PC-9 (cell line): ENCODE measurements at regions of chr22 and their contacts with region 1.

Region 1: GRCh38 chr22:47294222-47294532 is 531.7 kb downstream of the TBC1D22A start:
- DNase-seq: no peak
- H3K4me3 ChIP-seq: no peak overlapping the region
- H3K27ac ChIP-seq: no peak overlapping the region
- H3K4me1 ChIP-seq: no peaks in the 10 kb centered on the region
- H3K27me3 ChIP-seq: peaks cover 96% of the 10 kb centered on the region
- CTCF ChIP-seq: no peak

Region 2: DNA sequence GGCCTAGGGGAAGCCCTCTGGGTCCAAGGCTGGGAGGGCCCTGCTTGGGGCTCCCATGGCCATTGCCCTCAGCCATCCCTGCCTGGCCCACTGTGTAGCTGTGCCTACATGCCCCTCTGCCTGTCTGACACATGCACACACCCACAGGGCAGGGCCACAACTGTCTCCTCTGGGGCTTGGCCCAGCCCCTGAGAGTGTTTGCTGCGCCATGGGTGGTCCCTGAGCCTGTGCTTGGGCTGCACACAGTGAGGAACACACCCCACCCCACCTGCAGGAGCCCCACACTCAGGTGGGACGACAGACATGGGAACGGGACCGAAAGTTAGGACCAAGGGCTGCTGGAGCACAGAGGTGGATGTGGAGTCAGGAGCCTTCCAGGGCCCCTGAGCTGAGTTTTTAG is 42.3 kb before region 1 on chr22:
- CTCF ChIA-PET with region 1: no interaction called
- POLR2A ChIA-PET with region 1: interaction called, 16 read pairs
- intact Hi-C with region 1: no loop called
- DNase-seq: peak in 1 of 2 experiments; percentile 28
- H3K4me3 ChIP-seq: no peak overlapping the region
- H3K27ac ChIP-seq: no peak overlapping the region
- H3K4me1 ChIP-seq: no peaks in the 10 kb centered on the region
- H3K27me3 ChIP-seq: peaks cover 83% of the 10 kb centered on the region
- CTCF ChIP-seq: no peak

Region 3: GRCh38 chr22:47270463-47271135 is 23.6 kb before region 1 on chr22:
- CTCF ChIA-PET with region 1: no interaction called
- POLR2A ChIA-PET with region 1: no interaction called
- intact Hi-C with region 1: no loop called
- DNase-seq: no peak
- H3K4me3 ChIP-seq: no peak overlapping the region
- H3K27ac ChIP-seq: no peak overlapping the region
- H3K4me1 ChIP-seq: 0 out of 2 replicates have a peak, but pooled peaks cover 5% of the 10 kb centered on the region
- H3K27me3 ChIP-seq: peaks cover 64% of the 10 kb centered on the region
- CTCF ChIP-seq: no peak

Region 4: GRCh38 chr22:47310601-47311000 is 16.4 kb after region 1 on chr22:
- CTCF ChIA-PET with region 1: no interaction called
- POLR2A ChIA-PET with region 1: interaction called, 19 read pairs
- intact Hi-C with region 1: no loop called
- DNase-seq: peak in 1 of 2 experiments; percentile 42
- H3K4me3 ChIP-seq: no peak overlapping the region
- H3K27ac ChIP-seq: no peak overlapping the region
- H3K4me1 ChIP-seq: no peaks in the 10 kb centered on the region
- H3K27me3 ChIP-seq: no peaks in the 10 kb centered on the region
- CTCF ChIP-seq: no peak

Region 5: DNA sequence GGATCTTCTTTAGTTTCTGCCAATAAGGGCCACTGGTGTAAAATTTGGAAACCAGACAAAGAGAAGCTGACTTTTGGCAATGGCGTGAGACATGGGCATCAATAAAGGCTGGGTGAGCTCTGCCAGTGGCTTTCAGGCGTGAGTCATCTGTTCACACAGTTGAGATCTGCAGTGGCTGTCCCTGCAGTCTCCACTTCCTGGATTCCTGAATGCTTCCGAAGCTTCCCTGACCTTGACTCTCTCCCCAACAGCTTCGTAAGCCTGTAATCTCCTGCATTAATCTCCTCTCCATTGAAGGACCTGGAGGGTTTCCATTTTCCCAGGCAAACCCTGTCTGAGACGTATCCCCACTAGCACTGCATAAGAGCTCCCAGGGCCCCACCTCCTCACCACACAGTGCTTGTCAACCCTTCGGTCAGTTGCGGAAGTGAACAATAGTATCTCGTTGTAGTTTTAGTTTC is 43.0 kb after region 1 on chr22:
- CTCF ChIA-PET with region 1: no interaction called
- POLR2A ChIA-PET with region 1: interaction called, 25 read pairs
- intact Hi-C with region 1: no loop called
- DNase-seq: peak; percentile 72 to 73
- H3K4me3 ChIP-seq: peak overlapping the region; percentile 40; the same call in 1 of the 2 replicates
- H3K27ac ChIP-seq: no peak overlapping the region
- H3K4me1 ChIP-seq: no peaks in the 10 kb centered on the region
- H3K27me3 ChIP-seq: peaks cover 30% of the 10 kb centered on the region
- CTCF ChIP-seq: no peak